Gastrocnemius medialis (tissue), 4 donors: ENCODE measurements at regions of chr18 and their contacts with region 1.

Region 1: DNA sequence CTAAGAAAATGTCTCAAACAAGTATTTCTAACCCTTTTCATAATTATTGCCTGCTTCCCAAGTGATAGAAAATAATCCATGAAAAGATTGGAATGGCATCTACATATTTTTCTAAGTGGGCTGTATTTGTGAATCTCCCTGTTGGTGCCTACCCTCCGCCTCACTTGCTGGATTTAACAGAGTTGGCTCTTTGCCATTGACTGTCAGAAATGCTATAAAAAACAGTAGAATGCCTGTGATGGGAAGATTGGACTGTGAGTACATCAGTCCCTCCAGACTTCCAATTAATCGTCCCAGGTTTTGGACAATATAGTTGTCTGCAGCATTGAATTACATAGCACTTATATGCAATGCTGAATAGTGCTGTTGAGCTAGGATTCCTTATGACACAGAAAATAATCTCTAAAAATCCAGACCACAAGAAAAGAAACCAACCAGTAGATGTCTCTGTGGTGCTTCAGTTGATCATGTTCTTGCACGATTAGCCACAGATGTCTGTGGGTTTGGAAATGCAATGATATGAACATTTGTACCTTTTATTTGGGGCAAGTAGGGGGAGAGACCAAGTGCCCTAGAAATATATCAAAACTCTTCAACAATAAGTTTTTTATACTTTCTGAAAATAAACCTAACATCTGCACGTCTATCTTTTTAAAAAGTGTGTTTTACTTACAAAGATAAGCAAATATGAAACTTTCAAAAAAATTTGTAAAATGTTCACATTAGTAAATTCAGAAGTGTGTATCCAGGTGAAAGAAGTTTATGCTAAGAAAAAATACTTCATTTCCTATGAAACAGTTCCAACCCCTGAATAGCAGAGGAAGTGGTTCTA is 88.5 kb downstream of the DYNAP start:
- DNase-seq: no peak
- ATAC-seq: no peak
- H3K4me3 ChIP-seq: no peak overlapping the region
- H3K27ac ChIP-seq: no peak overlapping the region
- H3K4me1 ChIP-seq: no peaks in the 10 kb centered on the region
- H3K27me3 ChIP-seq: no peaks in the 10 kb centered on the region
- CTCF ChIP-seq: no peak
- POLR2A ChIP-seq: no peak

Region 2: DNA sequence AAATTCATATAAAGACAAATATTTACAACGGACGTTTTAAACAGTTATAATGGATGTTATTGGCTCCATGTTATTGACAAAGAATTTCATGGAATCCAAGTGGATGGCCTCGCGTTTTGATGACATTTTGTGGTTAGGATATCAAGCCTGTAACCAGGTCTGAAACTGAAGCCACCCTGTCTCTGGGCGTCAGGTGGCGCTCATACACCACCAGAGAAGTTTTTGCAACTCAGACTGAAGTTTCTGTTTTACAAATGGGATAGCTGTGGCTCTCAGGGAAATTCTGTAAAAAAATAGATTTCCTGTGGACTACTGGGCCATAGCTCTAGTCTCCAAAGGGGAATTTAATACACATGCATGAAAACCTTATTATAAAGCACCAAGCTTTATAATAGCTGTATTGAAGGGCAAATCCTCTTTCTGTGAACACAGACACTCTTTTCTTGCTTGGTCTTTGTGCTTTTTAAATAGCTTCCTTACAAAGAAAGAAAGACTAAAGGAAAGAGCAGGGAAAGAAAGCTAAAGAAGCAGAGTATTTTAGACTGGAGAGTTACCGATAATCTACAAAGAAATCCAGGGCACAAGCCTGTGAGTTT is 235.1 kb before region 1 on chr18:
- in situ Hi-C with region 1: loop called in 1 of 4 experiments (anchors 25 kb)
- intact Hi-C with region 1: loop called (anchors 10 kb)
- DNase-seq: no peak
- ATAC-seq: no peak
- H3K4me3 ChIP-seq: no peak overlapping the region
- H3K27ac ChIP-seq: no peak overlapping the region
- H3K4me1 ChIP-seq: no peaks in the 10 kb centered on the region
- H3K27me3 ChIP-seq: no peaks in the 10 kb centered on the region
- CTCF ChIP-seq: peak in 3 of 5 experiments; percentile 28 to 49 (median 41)
- POLR2A ChIP-seq: no peak

Region 3: DNA sequence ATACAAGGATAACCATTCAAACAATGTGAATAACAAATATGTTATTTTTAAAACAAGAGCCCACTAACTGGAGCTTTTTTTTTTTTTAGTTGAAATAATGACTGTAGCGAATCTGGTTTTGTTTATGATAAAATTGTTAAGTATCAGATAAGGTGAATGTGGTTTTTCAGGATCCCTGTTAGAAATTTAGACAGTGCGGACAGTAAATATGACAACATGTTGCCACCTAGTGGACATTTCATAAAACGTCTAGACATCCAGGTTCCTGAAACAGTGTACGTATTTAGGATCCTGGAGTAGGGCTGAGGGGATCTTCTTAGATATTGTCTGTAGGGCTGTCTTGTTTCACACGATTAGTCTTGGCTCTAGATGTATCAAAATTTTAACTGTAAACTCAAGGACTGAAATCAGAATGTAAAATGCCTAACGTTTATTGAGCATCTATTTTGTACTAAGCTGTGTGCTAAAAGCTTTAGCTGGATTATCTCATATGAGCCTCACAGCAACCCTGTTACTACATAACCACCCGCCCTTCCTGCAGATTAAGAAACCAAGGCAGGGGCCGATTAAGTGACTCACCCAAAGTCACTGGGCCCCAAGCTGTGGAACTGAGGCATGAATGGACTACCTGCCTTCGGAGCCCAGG is 303.6 kb after region 1 on chr18:
- in situ Hi-C with region 1: loop called in 3 of 4 experiments (anchors 10 to 25 kb)
- intact Hi-C with region 1: no loop called
- DNase-seq: no peak
- ATAC-seq: no peak
- H3K4me3 ChIP-seq: no peak overlapping the region
- H3K27ac ChIP-seq: no peak overlapping the region
- H3K4me1 ChIP-seq: no peaks in the 10 kb centered on the region
- H3K27me3 ChIP-seq: no peaks in the 10 kb centered on the region
- CTCF ChIP-seq: peak; percentile 28 to 58 (median 37)
- POLR2A ChIP-seq: no peak